ENCODE measurements at regions of chr7 and their contacts with region 1.

Region 1: GRCh38 chr7:7761340-7761980 is 43.1 kb upstream of the RPA3 start:
- DNase-seq: peak; percentile 58
- H3K4me3 ChIP-seq: peak overlapping the region; percentile 5 to 58 (median 40)
- H3K27ac ChIP-seq: no peak overlapping the region
- H3K4me1 ChIP-seq: peaks cover 11% of the 10 kb centered on the region
- H3K27me3 ChIP-seq: no peaks in the 10 kb centered on the region
- CTCF ChIP-seq: peak in 1 of 2 donors; percentile 19
- POLR2A ChIP-seq: no peak

Region 2: GRCh38 chr7:7595451-7595850 is 166.0 kb before region 1 on chr7:
- CTCF ChIA-PET with region 1: interaction called, 9 read pairs
- POLR2A ChIA-PET with region 1: no interaction called
- dilution Hi-C with region 1: no loop called
- intact Hi-C with region 1: loop called (anchors 1 kb)
- DNase-seq: peak; percentile 41
- H3K4me3 ChIP-seq: no peak overlapping the region
- H3K27ac ChIP-seq: no peak overlapping the region
- H3K4me1 ChIP-seq: no peaks in the 10 kb centered on the region
- H3K27me3 ChIP-seq: no peaks in the 10 kb centered on the region
- CTCF ChIP-seq: no peak
- POLR2A ChIP-seq: no peak

Region 3: DNA sequence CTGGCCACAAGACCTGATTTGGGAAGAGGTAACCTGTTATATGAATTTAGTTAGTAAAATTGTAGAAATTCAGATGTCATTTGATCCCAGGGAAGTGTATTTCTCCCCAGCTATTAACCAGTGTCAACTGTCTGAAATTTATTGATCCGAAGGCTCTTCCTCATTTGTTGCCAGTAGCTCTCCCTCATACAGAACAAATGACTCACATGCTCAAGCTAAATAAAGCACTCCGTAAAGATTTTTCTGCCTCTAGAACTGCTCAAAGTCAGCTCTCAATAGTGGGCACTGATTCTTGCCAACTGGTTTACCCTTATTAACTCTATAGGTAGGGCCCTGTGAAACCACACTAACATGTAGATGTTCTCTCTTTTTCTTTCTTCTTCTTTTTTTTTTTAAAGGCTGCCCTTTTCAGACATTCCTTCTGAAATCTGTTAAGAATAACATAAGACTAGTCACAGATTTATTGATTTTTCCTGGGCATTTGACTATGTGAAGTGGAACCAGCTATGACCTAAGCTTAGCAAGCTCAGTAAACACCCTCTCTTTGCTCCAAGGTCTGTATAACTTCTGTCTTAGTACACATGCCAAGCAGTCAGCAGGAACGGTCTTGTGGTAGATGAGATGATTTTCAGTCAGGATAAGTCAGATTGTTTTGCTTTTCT is 64.9 kb before region 1 on chr7:
- CTCF ChIA-PET with region 1: no interaction called
- POLR2A ChIA-PET with region 1: no interaction called
- dilution Hi-C with region 1: no loop called
- intact Hi-C with region 1: no loop called
- DNase-seq: peak; percentile 23
- H3K4me3 ChIP-seq: no peak overlapping the region
- H3K27ac ChIP-seq: no peak overlapping the region
- H3K4me1 ChIP-seq: peaks cover 6% of the 10 kb centered on the region
- H3K27me3 ChIP-seq: no peaks in the 10 kb centered on the region
- CTCF ChIP-seq: no peak
- POLR2A ChIP-seq: no peak

Region 4: GRCh38 chr7:7861211-7861633 is 99.8 kb after region 1 on chr7:
- CTCF ChIA-PET with region 1: interaction called, 3 read pairs
- POLR2A ChIA-PET with region 1: no interaction called
- dilution Hi-C with region 1: no loop called
- intact Hi-C with region 1: loop called (anchors 1 kb)
- DNase-seq: peak; percentile 96
- H3K4me3 ChIP-seq: no peak overlapping the region
- H3K27ac ChIP-seq: no peak overlapping the region
- H3K4me1 ChIP-seq: peaks cover 21% of the 10 kb centered on the region
- H3K27me3 ChIP-seq: no peaks in the 10 kb centered on the region
- CTCF ChIP-seq: no peak
- POLR2A ChIP-seq: peak; percentile 50

Region 5: DNA sequence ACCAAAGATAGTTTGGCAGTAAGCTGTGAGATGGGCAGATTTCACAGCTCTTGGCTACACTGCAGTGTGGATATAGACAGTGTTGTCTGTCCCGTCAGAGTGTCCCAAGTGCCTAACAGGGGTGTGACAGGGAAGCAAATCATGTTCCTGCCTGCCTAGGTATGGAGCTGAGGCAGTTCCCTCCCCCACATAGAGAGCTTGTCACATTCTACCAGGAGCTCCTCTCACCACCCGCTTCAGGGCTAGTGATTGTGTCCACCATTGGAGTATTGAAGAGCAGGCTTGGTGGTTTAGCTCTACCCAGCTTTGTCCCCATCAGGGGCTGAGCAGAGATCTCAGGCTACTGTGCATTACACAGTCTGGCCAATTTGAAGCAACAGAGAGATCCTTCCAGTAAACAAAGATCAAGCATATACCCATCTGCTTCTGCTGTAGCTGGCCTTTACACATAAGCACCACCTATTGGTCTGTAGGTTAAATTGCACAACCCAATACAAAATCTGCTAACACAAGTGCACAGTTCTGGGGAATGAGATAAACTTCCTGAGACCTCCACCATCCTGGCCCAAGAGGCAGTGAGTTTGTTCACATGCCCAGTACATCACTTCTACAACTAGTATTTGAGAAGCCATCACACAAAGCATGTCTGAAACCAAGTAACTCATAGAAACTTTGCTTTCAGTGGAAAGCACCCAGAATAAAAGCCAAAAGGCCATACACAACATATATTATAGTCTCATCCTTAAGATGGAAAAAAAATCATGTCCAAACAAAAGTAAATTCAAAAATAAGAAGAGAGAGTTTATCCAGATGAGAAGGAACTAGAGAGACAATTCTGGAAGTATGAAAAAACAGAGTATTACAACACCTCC is 274.4 kb after region 1 on chr7:
- CTCF ChIA-PET with region 1: interaction called, 6 read pairs
- POLR2A ChIA-PET with region 1: no interaction called
- dilution Hi-C with region 1: no loop called
- intact Hi-C with region 1: loop called (anchors 1 kb)
- DNase-seq: peak; percentile 46
- H3K4me3 ChIP-seq: no peak overlapping the region
- H3K27ac ChIP-seq: no peak overlapping the region
- H3K4me1 ChIP-seq: no peaks in the 10 kb centered on the region
- H3K27me3 ChIP-seq: no peaks in the 10 kb centered on the region
- CTCF ChIP-seq: peak; percentile 33 to 46
- POLR2A ChIP-seq: no peak

Region 6: GRCh38 chr7:8190119-8190895 is 428.8 kb after region 1 on chr7:
- CTCF ChIA-PET with region 1: interaction called, 14 read pairs
- POLR2A ChIA-PET with region 1: no interaction called
- dilution Hi-C with region 1: no loop called
- intact Hi-C with region 1: loop called (anchors 2 kb)
- DNase-seq: peak; percentile 65
- H3K4me3 ChIP-seq: no peak overlapping the region
- H3K27ac ChIP-seq: no peak overlapping the region
- H3K4me1 ChIP-seq: no peaks in the 10 kb centered on the region
- H3K27me3 ChIP-seq: no peaks in the 10 kb centered on the region
- CTCF ChIP-seq: peak; percentile 34 to 57
- POLR2A ChIP-seq: no peak